Psoas muscle (tissue), 8 donors: ENCODE measurements at regions of chr15 and their contacts with region 1.

Region 1: GRCh38 chr15:75597667-75598341 is 18.7 kb upstream of the PTPN9 start:
- DNase-seq: no peak
- ATAC-seq: no peak
- H3K4me3 ChIP-seq: no peak overlapping the region
- H3K27ac ChIP-seq: no peak overlapping the region
- H3K4me1 ChIP-seq: peaks cover 10% of the 10 kb centered on the region
- H3K27me3 ChIP-seq: no peaks in the 10 kb centered on the region
- CTCF ChIP-seq: no peak

Region 2: DNA sequence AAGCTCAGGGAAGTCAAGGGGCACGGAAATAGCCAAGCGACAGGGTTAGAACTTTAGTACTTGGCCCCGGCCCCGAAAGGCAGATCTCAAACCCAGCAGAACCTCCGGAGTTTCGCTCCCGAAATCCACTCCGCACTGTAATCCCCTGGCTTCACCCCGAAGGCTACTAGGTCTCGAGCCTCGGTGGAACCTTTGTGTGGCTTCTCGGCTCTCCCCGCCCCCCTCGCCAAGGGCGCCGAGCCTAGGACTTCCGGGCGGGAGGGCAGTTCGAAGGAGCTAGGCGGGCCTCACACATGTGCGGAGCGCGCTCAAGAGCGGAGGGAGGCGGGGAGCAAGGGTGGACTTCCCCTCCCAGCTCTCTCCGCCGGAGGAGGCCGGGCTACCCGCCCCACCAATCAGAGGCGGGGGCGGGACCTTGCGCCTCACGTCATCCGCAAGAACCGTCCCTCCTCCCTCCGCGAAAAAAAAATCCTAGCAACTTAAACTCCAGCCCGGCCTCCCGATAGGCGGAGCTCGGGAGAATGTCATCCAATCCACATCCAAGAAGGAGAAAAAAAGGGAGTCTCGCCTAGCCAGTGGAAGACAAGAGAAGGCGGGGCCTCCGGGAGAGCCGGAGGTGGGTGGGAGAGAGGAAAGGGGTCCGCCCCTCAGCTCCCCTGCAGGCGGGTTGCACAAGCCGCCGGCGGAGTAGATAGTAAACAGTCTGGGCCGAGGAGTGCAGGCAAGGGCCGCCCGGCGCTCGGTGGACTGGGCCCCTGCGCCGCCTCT is 143.9 kb before region 1 on chr15:
- intact Hi-C with region 1: no loop called
- DNase-seq: peak; percentile 98 to 99
- ATAC-seq: peak; percentile 65 to 74 (median 70)
- H3K4me3 ChIP-seq: peak overlapping the region; percentile 96
- H3K27ac ChIP-seq: peak overlapping the region; percentile 99
- H3K4me1 ChIP-seq: peaks cover 15% of the 10 kb centered on the region
- H3K27me3 ChIP-seq: no peaks in the 10 kb centered on the region
- CTCF ChIP-seq: no peak

Region 3: DNA sequence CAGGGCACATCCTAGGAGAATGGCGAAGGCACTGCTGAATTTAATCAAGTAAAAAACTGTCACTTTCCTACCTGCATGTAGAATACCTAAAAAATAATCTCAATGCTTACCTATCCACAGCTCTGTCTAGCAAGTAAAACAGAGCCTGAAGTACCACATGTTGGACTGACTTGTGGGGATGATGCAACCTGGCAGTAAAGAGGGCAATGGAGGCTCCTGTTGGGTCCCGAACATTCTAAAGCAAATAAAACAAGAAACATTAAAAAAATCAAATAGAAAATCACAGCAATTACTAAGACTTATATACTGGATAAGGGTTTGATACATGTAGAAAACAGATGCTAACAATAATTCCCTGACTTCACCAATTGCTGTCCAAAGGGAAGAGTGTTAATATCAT is 74.8 kb before region 1 on chr15:
- intact Hi-C with region 1: loop called in 1 of 2 experiments (anchors 10 kb)
- DNase-seq: no peak
- ATAC-seq: no peak
- H3K4me3 ChIP-seq: no peak overlapping the region
- H3K27ac ChIP-seq: no peak overlapping the region
- H3K4me1 ChIP-seq: no peaks in the 10 kb centered on the region
- H3K27me3 ChIP-seq: no peaks in the 10 kb centered on the region
- CTCF ChIP-seq: no peak

Region 4: GRCh38 chr15:75647370-75648155 is 49.8 kb after region 1 on chr15 and contains the start of gene SNX33:
- intact Hi-C with region 1: no loop called
- DNase-seq: peak; percentile 84 to 87
- ATAC-seq: peak; percentile 74 to 84 (median 76)
- H3K4me3 ChIP-seq: peak within 1 kb of the TSS; percentile 93
- H3K27ac ChIP-seq: peak within 1 kb of the TSS; percentile 87
- H3K4me1 ChIP-seq: peaks cover 11% of the 10 kb centered on the region
- H3K27me3 ChIP-seq: no peaks in the 10 kb centered on the region
- CTCF ChIP-seq: peak; percentile 41
- total RNA-seq, gene SNX33: 3.5 to 8.0 (median 3.9) TPM

Region 5: DNA sequence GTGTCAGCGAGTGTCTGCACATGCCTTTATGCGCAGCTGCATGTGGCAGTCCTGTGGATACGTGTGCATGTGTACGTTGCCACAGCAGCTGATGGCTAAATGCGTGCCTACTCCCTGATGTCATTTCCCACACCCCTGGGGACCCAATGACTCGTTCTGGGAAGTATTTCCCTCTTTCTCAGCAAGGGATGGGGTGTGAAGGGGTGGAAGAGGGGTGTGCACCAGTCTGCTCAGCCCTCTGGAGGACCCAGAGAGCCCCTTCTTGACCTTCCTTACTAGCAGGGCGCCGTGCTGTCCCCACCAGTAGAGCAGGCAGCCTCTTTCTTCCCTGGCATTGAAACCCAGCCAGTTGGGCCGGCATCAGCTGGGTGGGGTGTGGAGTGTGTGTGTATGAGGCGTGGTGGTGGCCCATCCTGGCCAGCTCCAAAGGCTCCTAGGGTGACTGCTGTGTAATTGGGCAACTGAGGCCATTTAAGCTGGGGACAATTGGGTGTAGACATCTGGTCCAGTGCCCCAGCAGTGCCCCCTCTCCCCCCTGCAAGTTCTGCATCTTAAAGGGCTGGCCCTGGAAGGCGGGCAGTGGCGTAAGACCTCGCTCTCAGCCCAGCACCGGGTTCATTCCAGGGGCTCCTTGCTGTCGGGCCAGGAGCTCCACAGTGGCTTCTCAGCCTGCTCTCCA is 69.2 kb after region 1 on chr15:
- intact Hi-C with region 1: no loop called
- DNase-seq: peak; percentile 78 to 81
- ATAC-seq: peak; percentile 64 to 76 (median 72)
- H3K4me3 ChIP-seq: no peak overlapping the region
- H3K27ac ChIP-seq: peak overlapping the region; percentile 65
- H3K4me1 ChIP-seq: peaks cover 13% of the 10 kb centered on the region
- H3K27me3 ChIP-seq: no peaks in the 10 kb centered on the region
- CTCF ChIP-seq: no peak

Region 6: GRCh38 chr15:75891895-75892294 is 294.1 kb after region 1 on chr15:
- intact Hi-C with region 1: no loop called
- DNase-seq: no peak
- ATAC-seq: peak in 2 of 4 donors; percentile 38 to 76
- H3K4me3 ChIP-seq: no peak overlapping the region
- H3K27ac ChIP-seq: peak overlapping the region; percentile 65
- H3K4me1 ChIP-seq: no peaks in the 10 kb centered on the region
- H3K27me3 ChIP-seq: no peaks in the 10 kb centered on the region
- CTCF ChIP-seq: no peak